WTC11 (cell line): ENCODE measurements at regions of chr20 and their contacts with region 1.

Region 1: DNA sequence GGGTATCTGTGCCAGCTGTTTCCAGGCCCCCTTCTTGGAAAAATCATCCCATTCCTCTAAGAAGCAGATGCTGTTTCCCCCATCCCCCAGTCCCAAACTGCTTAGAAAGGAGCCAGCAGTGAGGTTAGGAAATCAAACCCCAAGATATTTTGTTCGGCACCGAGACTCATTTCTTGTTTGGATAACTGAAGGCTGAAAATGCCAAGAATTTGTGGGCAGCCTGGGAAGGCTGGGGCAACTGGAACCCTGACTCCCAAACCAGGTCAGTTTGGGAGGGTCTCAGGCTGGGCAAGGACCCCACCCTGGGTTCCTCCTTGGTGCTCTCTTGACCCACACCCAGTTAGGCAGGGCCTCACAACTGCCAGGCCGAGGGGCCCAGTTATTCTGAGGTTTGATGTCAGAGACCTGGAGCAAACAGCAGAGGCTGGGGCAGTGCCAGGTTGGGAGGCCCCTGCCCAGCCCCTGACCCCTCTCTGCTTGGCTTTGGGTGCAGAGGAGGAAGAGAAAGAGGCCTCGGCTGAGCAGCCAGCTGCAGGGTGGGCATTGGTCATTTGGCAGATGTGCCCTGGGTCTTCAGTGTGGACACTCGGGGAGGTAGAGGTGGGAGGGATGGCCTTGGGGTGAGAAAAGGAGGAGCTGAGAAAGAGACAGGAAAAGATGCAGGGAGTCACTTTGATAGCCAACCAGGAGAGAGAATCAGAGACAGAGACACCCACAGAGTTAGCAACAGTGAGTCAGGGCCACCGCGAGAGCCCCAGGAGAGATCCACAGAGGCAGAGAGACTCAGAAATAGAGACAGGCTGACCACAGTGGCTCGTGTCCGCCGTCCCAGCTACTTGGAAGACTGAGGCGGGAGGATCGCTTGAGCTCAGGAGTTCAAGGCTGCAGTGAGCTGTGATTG is 5.0 kb downstream of the ANGPT4 start:
- DNase-seq: no peak
- ATAC-seq: no peak
- H3K4me3 Mint-ChIP-seq: no peak overlapping the region
- H3K27ac Mint-ChIP-seq: no peak overlapping the region; the same call in 1 of the 2 replicates
- H3K4me1 Mint-ChIP-seq: peaks cover 3% of the 10 kb centered on the region; the same call in 1 of the 2 replicates
- H3K27me3 Mint-ChIP-seq: no peaks in the 10 kb centered on the region
- CTCF ChIP-seq: no peak

Region 2: GRCh38 chr20:815914-816606 is 95.1 kb before region 1 on chr20:
- CTCF ChIA-PET with region 1: interaction called, 15 read pairs
- POLR2A ChIA-PET with region 1: no interaction called
- DNase-seq: peak; percentile 76
- ATAC-seq: peak; percentile 88
- H3K4me3 Mint-ChIP-seq: 0 out of 2 replicates have a peak overlapping the region, but pooled peaks have one; percentile 9
- H3K27ac Mint-ChIP-seq: no peak overlapping the region
- H3K4me1 Mint-ChIP-seq: peaks cover 4% of the 10 kb centered on the region; the same call in 1 of the 2 replicates
- H3K27me3 Mint-ChIP-seq: peaks cover 2% of the 10 kb centered on the region; the same call in 1 of the 2 replicates
- CTCF ChIP-seq: peak; percentile 99

Region 3: DNA sequence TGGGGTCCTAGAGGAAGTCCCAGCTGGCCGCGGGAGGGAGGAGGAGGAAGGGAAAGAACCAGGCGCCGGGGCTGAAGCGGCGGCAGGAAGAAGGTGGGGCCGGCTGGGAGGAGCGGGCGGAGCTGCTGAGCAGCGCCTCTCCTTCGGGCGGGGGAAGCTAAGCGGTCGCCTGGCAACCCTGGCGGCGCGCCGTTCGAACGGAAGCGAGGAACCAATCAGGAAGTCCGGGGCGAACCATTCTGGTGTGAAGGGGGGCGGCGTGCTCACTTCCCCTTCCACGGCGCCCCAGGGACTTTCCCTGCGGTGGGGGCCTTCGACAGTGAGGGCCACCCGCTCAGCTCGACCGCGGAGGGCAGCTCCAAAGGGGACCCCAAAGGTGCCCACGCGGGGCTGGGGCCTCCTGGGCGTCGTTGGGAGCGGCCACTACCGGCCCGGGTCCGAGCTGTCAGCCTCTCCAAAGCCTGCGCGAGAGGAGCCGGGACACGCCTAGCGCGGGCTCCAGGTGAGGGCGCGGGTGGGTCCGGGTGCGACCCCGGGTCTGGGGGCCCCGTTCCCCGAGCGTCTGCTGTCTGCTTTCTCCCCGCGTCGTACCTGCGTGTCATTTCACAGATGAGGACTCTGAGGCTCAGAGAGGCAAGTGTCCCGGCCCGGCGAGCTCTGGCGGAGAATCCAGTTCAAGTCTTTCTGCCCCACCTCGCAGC is 77.5 kb before region 1 on chr20 and contains the start of gene FAM110A:
- CTCF ChIA-PET with region 1: interaction called, 13 read pairs
- POLR2A ChIA-PET with region 1: interaction called, 4 read pairs
- DNase-seq: peak; percentile 96
- ATAC-seq: peak; percentile 97
- H3K4me3 Mint-ChIP-seq: peak within 1 kb of the TSS; percentile 76
- H3K27ac Mint-ChIP-seq: no peak within 1 kb of the TSS
- H3K4me1 Mint-ChIP-seq: peaks cover 12% of the 10 kb centered on the region
- H3K27me3 Mint-ChIP-seq: peaks cover 20% of the 10 kb centered on the region
- CTCF ChIP-seq: no peak
- total RNA-seq, gene FAM110A: 17.2 to 18.8 TPM (median 18.0 TPM) in 3 replicates

Region 4: GRCh38 chr20:872855-873521 is 38.1 kb before region 1 on chr20:
- CTCF ChIA-PET with region 1: interaction called, 12 read pairs
- POLR2A ChIA-PET with region 1: no interaction called
- DNase-seq: peak; percentile 65
- ATAC-seq: peak; percentile 97
- H3K4me3 Mint-ChIP-seq: no peak overlapping the region
- H3K27ac Mint-ChIP-seq: no peak overlapping the region
- H3K4me1 Mint-ChIP-seq: peaks cover 10% of the 10 kb centered on the region
- H3K27me3 Mint-ChIP-seq: no peaks in the 10 kb centered on the region
- CTCF ChIP-seq: no peak

Region 5: DNA sequence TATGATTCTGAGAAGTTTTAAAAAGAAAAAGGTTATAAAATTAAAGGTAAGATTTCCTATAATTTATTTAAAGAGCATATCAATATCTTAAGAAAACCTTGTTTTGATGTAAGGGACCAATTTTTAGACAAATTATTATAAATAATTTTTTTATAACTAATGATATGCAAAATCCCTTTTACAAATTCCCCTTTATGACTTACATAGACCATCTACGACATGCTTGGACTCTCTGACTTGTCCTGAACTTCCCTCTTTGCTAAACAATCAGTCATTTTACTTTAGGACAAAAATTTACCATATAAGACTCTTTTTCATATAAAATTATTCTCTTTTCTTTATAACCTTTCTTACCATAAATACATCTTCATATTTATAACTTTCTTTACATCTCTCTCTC is 20.3 kb after region 1 on chr20:
- CTCF ChIA-PET with region 1: no interaction called
- POLR2A ChIA-PET with region 1: no interaction called
- DNase-seq: no peak
- ATAC-seq: no peak
- H3K4me3 Mint-ChIP-seq: no peak overlapping the region
- H3K27ac Mint-ChIP-seq: no peak overlapping the region
- H3K4me1 Mint-ChIP-seq: no peaks in the 10 kb centered on the region; the same call in 1 of the 2 replicates
- H3K27me3 Mint-ChIP-seq: peaks cover 20% of the 10 kb centered on the region
- CTCF ChIP-seq: no peak

Region 6: DNA sequence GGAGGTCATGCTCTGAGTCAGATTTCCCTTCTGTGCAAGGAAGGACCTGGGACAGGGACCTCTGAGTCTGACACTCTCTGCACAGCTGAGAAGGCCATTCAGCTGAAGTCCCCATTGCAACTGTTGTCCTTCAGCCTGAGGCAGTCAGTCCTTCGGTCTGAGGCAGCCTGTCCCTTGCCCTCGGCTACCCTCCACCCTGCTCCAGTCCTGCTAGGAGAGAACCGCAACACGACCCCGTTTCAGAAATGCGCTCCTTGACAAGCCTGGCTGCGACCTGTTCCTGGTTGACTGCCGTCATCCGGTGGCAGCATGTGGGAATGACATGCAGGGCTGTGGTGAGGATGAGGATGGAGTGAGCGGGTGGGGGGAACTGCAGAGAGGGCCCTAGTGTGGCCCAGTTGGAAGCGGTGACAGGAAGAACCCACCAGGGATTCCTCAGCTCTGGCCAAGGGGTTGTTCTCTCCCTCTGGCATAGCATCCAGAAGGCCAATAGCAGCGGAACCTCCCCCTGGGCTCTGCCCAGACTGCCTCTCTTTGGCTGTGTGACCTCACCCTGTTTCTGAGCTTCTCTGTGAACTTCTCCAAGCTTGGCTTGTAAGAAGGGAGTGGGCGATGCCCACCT is 45.3 kb after region 1 on chr20:
- CTCF ChIA-PET with region 1: interaction called, 71 read pairs
- POLR2A ChIA-PET with region 1: no interaction called
- DNase-seq: peak; percentile 88
- ATAC-seq: peak; percentile 88
- H3K4me3 Mint-ChIP-seq: no peak overlapping the region
- H3K27ac Mint-ChIP-seq: no peak overlapping the region
- H3K4me1 Mint-ChIP-seq: peaks cover 2% of the 10 kb centered on the region; the same call in 1 of the 2 replicates
- H3K27me3 Mint-ChIP-seq: peaks cover 5% of the 10 kb centered on the region
- CTCF ChIP-seq: peak; percentile 96

Region 7: GRCh38 chr20:973785-974194 is 62.7 kb after region 1 on chr20:
- CTCF ChIA-PET with region 1: no interaction called
- POLR2A ChIA-PET with region 1: no interaction called
- DNase-seq: peak; percentile 46
- ATAC-seq: peak; percentile 93
- H3K4me3 Mint-ChIP-seq: no peak overlapping the region
- H3K27ac Mint-ChIP-seq: no peak overlapping the region
- H3K4me1 Mint-ChIP-seq: no peaks in the 10 kb centered on the region
- H3K27me3 Mint-ChIP-seq: peaks cover 2% of the 10 kb centered on the region; the same call in 1 of the 2 replicates
- CTCF ChIP-seq: peak; percentile 58; the same call in 1 of the 2 replicates